ENCODE measurements at regions of chr19 and their contacts with region 1.

Region 1: DNA sequence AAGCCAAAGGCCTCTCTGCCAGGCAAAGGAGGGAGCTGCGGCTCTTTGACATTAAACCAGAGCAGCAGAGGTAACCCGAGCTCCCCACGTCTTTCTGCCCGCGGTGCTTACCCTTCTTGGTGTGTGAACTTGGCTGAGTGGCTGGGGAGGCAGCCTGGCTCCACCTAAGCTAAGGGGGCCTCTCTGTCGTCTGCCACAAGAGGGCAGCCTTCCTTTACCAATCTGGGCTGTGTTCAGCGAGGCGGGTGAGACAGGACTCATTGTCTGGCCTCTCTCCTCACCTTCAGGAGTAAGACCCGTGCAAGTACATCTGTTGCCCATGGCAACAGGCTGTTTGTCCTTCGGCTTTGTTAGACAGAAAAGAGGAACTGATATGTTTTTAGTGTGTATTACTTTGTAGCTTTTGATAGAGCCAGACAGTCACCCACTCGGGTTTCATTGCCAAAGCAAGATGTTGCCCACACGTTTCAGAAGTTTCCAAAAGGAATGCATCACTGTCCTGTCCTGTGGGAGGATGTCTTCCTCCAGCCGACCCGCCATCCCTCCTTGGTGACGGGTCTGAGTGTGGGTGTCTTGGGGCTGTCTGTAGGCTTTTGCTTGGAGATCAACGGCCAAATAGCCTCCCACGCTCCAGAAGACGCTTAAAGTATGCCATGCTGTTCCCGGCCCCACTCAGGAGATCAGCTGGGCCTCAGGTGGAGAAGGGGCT is 4.6 kb downstream of the POP4 start:
- DNase-seq: peak; percentile 77 to 85 (median 85)
- H3K4me3 ChIP-seq: no peak overlapping the region
- H3K27ac ChIP-seq: no peak overlapping the region
- H3K4me1 ChIP-seq: no peaks in the 10 kb centered on the region
- H3K27me3 ChIP-seq: no peaks in the 10 kb centered on the region
- CTCF ChIP-seq: peak; percentile 71 to 82 (median 73)
- EP300 ChIP-seq: no peak
- POLR2A ChIP-seq: no peak

Region 2: DNA sequence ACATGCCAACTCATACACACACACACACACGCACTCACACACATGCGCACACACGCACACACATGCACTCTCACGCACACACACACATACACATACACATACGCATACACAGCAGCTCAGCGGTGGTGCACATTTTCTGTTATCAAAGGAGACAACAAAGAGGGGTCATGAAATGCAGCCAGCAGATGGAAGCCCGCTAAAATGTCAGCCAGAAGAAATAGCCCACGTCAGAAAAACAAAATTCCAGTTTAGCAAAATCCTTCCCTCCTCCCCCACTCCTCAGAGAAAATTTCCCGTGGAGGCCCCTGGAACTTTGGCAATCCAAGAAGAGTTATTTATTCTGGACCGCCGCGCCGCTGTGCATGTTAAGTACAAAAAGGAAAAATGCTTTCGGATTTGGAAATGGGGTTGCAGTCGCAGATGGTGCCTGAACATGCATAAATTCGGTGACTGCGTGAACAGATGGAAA is 199.6 kb before region 1 on chr19:
- intact Hi-C with region 1: no loop called
- DNase-seq: peak; percentile 38 to 61 (median 54)
- H3K4me3 ChIP-seq: no peak overlapping the region
- H3K27ac ChIP-seq: peak overlapping the region in 1 of 2 donors; percentile 56
- H3K4me1 ChIP-seq: no peaks in the 10 kb centered on the region
- H3K27me3 ChIP-seq: no peaks in the 10 kb centered on the region
- CTCF ChIP-seq: no peak
- EP300 ChIP-seq: no peak
- POLR2A ChIP-seq: no peak

Region 3: DNA sequence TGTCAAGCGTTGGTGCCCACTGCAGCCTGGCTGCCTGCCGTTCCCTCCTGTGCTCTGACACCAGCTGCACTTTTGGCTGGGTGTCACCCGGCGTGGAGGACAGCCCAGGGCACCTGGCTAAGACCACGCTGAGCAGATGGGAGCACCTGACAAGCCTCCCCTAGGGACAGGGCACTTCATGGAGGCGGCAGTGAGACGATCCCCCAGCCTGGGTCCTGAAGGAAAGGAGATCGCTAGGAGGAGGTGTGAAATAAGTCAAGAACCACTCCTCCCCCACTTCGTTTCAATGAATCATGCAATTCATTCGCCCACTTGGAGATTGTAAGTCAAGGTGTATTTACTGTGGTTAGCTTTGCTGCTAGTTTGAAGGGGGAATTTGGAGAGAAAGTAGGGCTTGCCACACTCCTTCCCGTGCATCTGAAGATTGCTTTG is 46.1 kb before region 1 on chr19:
- intact Hi-C with region 1: no loop called
- DNase-seq: no peak
- H3K4me3 ChIP-seq: no peak overlapping the region
- H3K27ac ChIP-seq: no peak overlapping the region
- H3K4me1 ChIP-seq: no peaks in the 10 kb centered on the region
- H3K27me3 ChIP-seq: no peaks in the 10 kb centered on the region
- CTCF ChIP-seq: no peak
- EP300 ChIP-seq: no peak
- POLR2A ChIP-seq: no peak

Region 4: GRCh38 chr19:29665215-29665825 is 54.6 kb after region 1 on chr19 and contains the start of gene PLEKHF1:
- intact Hi-C with region 1: loop called in 3 of 4 experiments (anchors 5 to 10 kb)
- DNase-seq: peak; percentile 85 to 92 (median 89)
- H3K4me3 ChIP-seq: peak within 1 kb of the TSS; percentile 91
- H3K27ac ChIP-seq: peak within 1 kb of the TSS; percentile 72 to 86
- H3K4me1 ChIP-seq: peaks cover 14% of the 10 kb centered on the region
- H3K27me3 ChIP-seq: no peaks in the 10 kb centered on the region
- CTCF ChIP-seq: no peak
- EP300 ChIP-seq: no peak
- POLR2A ChIP-seq: peak; percentile 63
- total RNA-seq, gene PLEKHF1: 9.3 to 19.1 (median 13.8) TPM

Region 5: DNA sequence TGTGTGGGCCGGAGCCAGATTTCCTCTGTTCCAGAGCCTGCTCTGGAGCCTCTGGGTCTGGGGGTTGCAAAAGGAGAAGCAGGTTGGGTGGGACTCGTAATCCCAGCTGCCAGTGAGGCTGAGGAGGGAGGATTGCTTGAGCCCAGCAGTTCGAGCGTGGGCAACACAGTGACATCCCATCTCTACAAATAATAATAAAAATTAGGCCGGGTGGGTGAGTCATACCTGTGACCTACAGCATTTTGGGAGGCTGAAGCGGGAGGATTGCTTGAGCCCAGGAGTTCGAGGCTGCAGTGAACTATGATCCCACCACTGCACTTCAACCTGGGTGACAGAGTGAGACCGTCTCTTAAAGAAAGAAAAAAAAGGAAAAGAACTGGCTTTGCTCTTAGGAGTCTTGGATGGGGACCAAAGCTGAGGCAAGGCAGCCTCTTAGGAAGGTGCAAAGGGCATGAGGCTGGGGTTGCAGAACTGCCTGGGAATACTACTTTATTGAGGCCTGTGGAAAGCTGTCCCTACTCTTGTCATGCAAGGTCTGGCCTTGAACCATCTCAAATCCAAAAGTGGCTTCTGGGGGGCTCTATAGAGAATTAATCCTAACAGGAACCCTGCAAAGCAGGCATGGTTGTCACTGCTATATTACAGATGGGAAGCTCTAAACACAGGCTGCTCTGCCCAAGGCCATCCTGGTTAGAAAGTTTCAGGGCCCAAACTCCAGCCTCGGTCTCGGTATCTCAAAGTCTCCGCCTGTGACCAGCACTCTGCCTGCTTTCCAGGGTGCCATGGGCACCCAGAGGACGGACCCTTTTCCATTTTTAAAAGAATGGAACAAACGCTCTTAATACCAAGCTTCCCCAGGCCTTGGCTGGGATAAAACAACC is 105.2 kb after region 1 on chr19:
- intact Hi-C with region 1: loop called (anchors 1 to 2 kb)
- DNase-seq: no peak
- H3K4me3 ChIP-seq: peak overlapping the region; percentile 97
- H3K27ac ChIP-seq: peak overlapping the region; percentile 86 to 94
- H3K4me1 ChIP-seq: peaks cover 2% of the 10 kb centered on the region
- H3K27me3 ChIP-seq: no peaks in the 10 kb centered on the region
- CTCF ChIP-seq: no peak
- EP300 ChIP-seq: no peak
- POLR2A ChIP-seq: no peak